Left colon (tissue), 2 donors: ENCODE measurements at regions of chr2 and their contacts with region 1.

Region 1: GRCh38 chr2:113370478-113371091 is 66.9 kb upstream of the ZNG1B start:
- DNase-seq: peak; percentile 55 to 67
- ATAC-seq: peak; percentile 100

Region 2: GRCh38 chr2:113248997-113249770 is 121.4 kb before region 1 on chr2:
- intact Hi-C with region 1: loop called (anchors 5 kb)
- DNase-seq: peak; percentile 71 to 87
- ATAC-seq: peak; percentile 87